T-cell (primary cell): ENCODE measurements at regions of chrX and their contacts with region 1.

Region 1: GRCh38 chrX:17299206-17299605 is 75.8 kb upstream of the NHS start:
- DNase-seq: no peak
- ATAC-seq: no peak
- H3K4me3 ChIP-seq: no peak overlapping the region
- H3K4me3 Mint-ChIP-seq: no peak overlapping the region
- H3K27ac ChIP-seq: no peak overlapping the region
- H3K27ac Mint-ChIP-seq: no peak overlapping the region
- H3K4me1 ChIP-seq: no peaks in the 10 kb centered on the region
- H3K4me1 Mint-ChIP-seq: no peaks in the 10 kb centered on the region
- H3K27me3 ChIP-seq: no peaks in the 10 kb centered on the region
- H3K27me3 Mint-ChIP-seq: no peaks in the 10 kb centered on the region

Region 2: GRCh38 chrX:17435466-17435865 is 136.3 kb after region 1 on chrX:
- CTCF ChIA-PET with region 1: no interaction called
- POLR2A ChIA-PET with region 1: interaction called in 1 of 2 experiments, 11 read pairs
- DNase-seq: no peak
- ATAC-seq: no peak
- H3K4me3 ChIP-seq: no peak overlapping the region
- H3K4me3 Mint-ChIP-seq: no peak overlapping the region
- H3K27ac ChIP-seq: no peak overlapping the region
- H3K27ac Mint-ChIP-seq: no peak overlapping the region
- H3K4me1 ChIP-seq: no peaks in the 10 kb centered on the region
- H3K4me1 Mint-ChIP-seq: no peaks in the 10 kb centered on the region
- H3K27me3 ChIP-seq: no peaks in the 10 kb centered on the region
- H3K27me3 Mint-ChIP-seq: peaks cover 0 to 17% of the 10 kb centered on the region in 2 donors